ENCODE measurements at regions of chr2 and their contacts with region 1.

Region 1: GRCh38 chr2:28477645-28478044 is 18.2 kb upstream of the PLB1 start:
- DNase-seq: no peak
- H3K4me3 ChIP-seq: no peak overlapping the region
- H3K27ac ChIP-seq: no peak overlapping the region
- H3K4me1 ChIP-seq: no peaks in the 10 kb centered on the region
- H3K27me3 ChIP-seq: no peaks in the 10 kb centered on the region
- CTCF ChIP-seq: no peak
- POLR2A ChIP-seq: no peak

Region 2: GRCh38 chr2:28506112-28506910 is 28.7 kb after region 1 on chr2:
- intact Hi-C with region 1: loop called (anchors 1 kb)
- DNase-seq: no peak
- H3K4me3 ChIP-seq: no peak overlapping the region
- H3K27ac ChIP-seq: no peak overlapping the region
- H3K4me1 ChIP-seq: no peaks in the 10 kb centered on the region
- H3K27me3 ChIP-seq: no peaks in the 10 kb centered on the region
- CTCF ChIP-seq: no peak
- POLR2A ChIP-seq: no peak

Measured in breast epithelium (tissue), 4 donors.